ENCODE measurements at regions of chr11 and their contacts with region 1.

Region 1: DNA sequence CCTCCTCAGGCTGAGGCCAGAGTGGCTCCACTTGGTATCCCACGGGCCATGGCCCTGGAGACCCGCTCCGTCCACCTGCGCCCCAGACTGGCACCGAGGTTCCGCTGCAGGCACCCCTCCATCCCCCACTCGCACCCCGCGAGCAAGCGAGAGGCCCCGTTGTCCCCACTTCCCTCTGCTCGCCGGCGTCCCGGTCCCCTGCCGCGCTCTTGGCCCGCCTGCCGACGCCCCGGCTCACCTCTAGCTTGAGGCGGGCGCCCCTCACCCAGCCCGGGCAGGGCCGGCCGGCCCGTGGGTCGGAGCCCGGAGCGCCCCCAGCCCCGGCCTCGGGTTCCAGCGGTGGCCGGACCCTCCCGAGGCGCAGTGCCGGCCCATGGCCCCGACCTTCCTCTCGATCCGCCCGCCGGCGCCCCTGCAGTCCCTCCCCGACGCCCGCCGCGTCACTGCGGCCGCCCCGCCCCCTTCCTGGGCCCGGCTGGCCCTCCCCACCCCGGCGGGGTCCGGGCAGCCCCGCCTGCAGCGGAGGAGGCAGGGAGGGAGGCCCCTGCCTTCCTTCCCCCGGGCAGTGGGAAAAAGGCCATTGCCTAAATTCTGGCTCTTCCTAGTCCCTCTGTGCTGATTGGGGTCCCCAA is at the start of gene PITPNM1:
- DNase-seq: no peak
- H3K4me3 ChIP-seq: peak within 1 kb of the TSS; percentile 64 to 90 (median 68)
- H3K27ac ChIP-seq: peak within 1 kb of the TSS; percentile 96 to 99 (median 98)
- H3K4me1 ChIP-seq: peaks cover 32 to 57% (median 47%) of the 10 kb centered on the region in 3 donors
- H3K27me3 ChIP-seq: peaks cover 0 to 38% (median 0%) of the 10 kb centered on the region in 4 donors
- CTCF ChIP-seq: no peak
- POLR2A ChIP-seq: peak in 3 of 4 donors; percentile 28 to 83 (median 55)
- total RNA-seq, gene PITPNM1: 24.5 to 35.9 (median 28.7) TPM

Region 2: GRCh38 chr11:67401495-67402191 is 103.4 kb before region 1 on chr11 and contains the start of gene PPP1CA:
- intact Hi-C with region 1: loop called (anchors 5 kb)
- DNase-seq: peak; percentile 62
- H3K4me3 ChIP-seq: peak within 1 kb of the TSS; percentile 67 to 98 (median 84)
- H3K27ac ChIP-seq: peak within 1 kb of the TSS; percentile 90 to 98 (median 96)
- H3K4me1 ChIP-seq: peaks cover 20 to 79% (median 35%) of the 10 kb centered on the region in 3 donors
- H3K27me3 ChIP-seq: peaks cover 0 to 22% (median 0%) of the 10 kb centered on the region in 4 donors
- CTCF ChIP-seq: peak in 5 of 6 experiments; percentile 11 to 44 (median 33)
- POLR2A ChIP-seq: peak in 2 of 4 donors; percentile 48 to 76
- total RNA-seq, gene PPP1CA: 146 to 202 (median 185) TPM